Natural killer cell (primary cell): ENCODE measurements at regions of chr13 and their contacts with region 1.

Region 1: GRCh38 chr13:100674848-100675660 is 459 bp upstream of the TMTC4 start:
- DNase-seq: peak; percentile 99
- ATAC-seq: peak; percentile 90 to 98 (median 92)
- H3K4me3 ChIP-seq: peak overlapping the region; percentile 90
- H3K4me3 Mint-ChIP-seq: peak overlapping the region; percentile 96
- H3K27ac ChIP-seq: peak overlapping the region; percentile 70
- H3K27ac Mint-ChIP-seq: peak overlapping the region; percentile 71 to 95
- H3K4me1 ChIP-seq: peaks cover 23% of the 10 kb centered on the region
- H3K4me1 Mint-ChIP-seq: peaks cover 32 to 44% of the 10 kb centered on the region in 2 donors
- H3K27me3 ChIP-seq: no peaks in the 10 kb centered on the region
- H3K27me3 Mint-ChIP-seq: no peaks in the 10 kb centered on the region
- CTCF ChIP-seq: peak; percentile 26

Region 2: DNA sequence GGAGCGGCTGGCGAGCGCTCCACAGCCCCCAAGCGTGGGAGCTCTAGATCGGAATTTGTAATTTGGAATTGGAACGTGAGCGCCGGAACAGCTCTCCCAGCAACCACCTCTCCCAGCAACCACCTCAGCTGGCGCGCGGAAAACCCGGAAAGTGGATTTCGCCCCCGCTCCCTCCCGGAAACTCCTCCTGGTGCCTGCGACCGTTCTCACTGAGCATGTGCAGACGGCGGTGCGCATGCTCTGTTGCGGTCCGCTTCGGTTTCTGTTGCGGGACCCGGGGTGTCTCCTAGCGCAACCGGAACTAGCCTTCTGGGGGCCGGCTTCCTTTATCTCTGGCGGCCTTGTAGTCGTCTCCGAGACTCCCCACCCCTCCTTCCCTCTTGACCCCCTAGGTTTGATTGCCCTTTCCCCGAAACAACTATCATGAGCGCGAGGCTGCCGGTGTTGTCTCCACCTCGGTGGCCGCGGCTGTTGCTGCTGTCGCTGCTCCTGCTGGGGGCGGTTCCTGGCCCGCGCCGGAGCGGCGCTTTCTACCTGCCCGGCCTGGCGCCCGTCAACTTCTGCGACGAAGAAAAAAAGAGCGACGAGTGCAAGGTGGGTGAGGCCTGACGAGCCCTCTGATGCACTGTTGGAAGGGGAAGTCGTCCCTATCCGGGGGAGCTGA is 1173.7 kb before region 1 on chr13 and contains the start of gene TM9SF2:
- intact Hi-C with region 1: loop called (anchors 10 kb)
- DNase-seq: peak; percentile 97 to 99
- ATAC-seq: peak; percentile 61 to 78 (median 74)
- H3K4me3 ChIP-seq: peak within 1 kb of the TSS; percentile 88
- H3K4me3 Mint-ChIP-seq: peak within 1 kb of the TSS; percentile 96
- H3K27ac ChIP-seq: peak within 1 kb of the TSS; percentile 89
- H3K27ac Mint-ChIP-seq: peak within 1 kb of the TSS; percentile 94 to 98
- H3K4me1 ChIP-seq: peaks cover 45% of the 10 kb centered on the region
- H3K4me1 Mint-ChIP-seq: peaks cover 81 to 83% of the 10 kb centered on the region in 2 donors
- H3K27me3 ChIP-seq: no peaks in the 10 kb centered on the region
- H3K27me3 Mint-ChIP-seq: no peaks in the 10 kb centered on the region
- CTCF ChIP-seq: no peak
- total RNA-seq, gene TM9SF2: 41.8 to 62.1 (median 51.4) TPM

Region 3: GRCh38 chr13:99577934-99578917 is 1096.8 kb before region 1 on chr13:
- intact Hi-C with region 1: no loop called
- DNase-seq: peak in 1 of 2 donors; percentile 26
- ATAC-seq: no peak
- H3K4me3 ChIP-seq: no peak overlapping the region
- H3K4me3 Mint-ChIP-seq: no peak overlapping the region
- H3K27ac ChIP-seq: no peak overlapping the region
- H3K27ac Mint-ChIP-seq: no peak overlapping the region
- H3K4me1 ChIP-seq: peaks cover 3% of the 10 kb centered on the region
- H3K4me1 Mint-ChIP-seq: peaks cover 9% of the 10 kb centered on the region in 2 donors
- H3K27me3 ChIP-seq: no peaks in the 10 kb centered on the region
- H3K27me3 Mint-ChIP-seq: no peaks in the 10 kb centered on the region
- CTCF ChIP-seq: no peak

Region 4: DNA sequence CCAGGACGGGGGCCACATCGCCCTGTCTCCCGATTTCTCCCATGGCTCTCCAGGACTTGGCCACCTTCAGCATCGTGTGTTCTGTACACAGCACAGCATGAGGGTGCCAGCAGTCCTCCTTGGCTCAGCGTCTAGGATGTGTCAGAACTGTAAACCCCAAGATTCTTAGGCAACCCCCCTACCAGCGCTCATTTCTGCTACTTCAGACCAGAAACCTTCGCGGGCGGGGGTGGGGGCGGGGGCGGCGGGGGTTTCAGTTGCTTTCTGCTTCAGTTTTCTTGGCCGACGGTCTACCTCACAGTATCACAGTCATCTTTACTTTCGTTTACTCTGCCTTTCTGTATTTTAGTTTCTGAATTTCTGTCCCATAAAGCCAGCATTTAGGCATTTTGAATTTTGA is 168.9 kb before region 1 on chr13:
- intact Hi-C with region 1: no loop called
- DNase-seq: peak in 1 of 2 donors; percentile 16
- ATAC-seq: peak; percentile 66 to 78 (median 70)
- H3K4me3 ChIP-seq: no peak overlapping the region
- H3K4me3 Mint-ChIP-seq: peak overlapping the region; percentile 67
- H3K27ac ChIP-seq: peak overlapping the region; percentile 53
- H3K27ac Mint-ChIP-seq: peak overlapping the region; percentile 74 to 85
- H3K4me1 ChIP-seq: peaks cover 17% of the 10 kb centered on the region
- H3K4me1 Mint-ChIP-seq: peaks cover 21 to 36% of the 10 kb centered on the region in 2 donors
- H3K27me3 ChIP-seq: no peaks in the 10 kb centered on the region
- H3K27me3 Mint-ChIP-seq: no peaks in the 10 kb centered on the region
- CTCF ChIP-seq: no peak

Region 5: DNA sequence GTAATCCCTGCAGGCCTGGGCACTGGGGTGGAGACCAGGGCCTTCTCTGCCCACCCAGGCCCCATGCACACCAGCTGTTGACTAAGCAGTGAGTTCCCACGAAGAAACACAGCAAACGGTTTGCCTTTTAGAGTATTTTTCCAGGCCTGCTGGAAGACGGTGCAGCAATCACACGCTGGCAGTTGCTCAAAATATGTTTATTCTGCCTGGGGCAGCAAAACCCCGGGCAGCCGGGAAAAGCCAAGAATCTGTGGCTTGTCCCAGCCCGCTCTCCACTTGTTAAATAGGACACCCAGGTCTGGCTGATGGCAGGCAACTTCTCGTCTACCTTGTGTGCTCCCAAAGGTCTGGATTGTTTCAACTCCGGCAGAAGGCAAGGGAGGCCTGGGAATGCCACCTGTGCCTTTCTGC is 127.3 kb before region 1 on chr13:
- intact Hi-C with region 1: no loop called
- DNase-seq: no peak
- ATAC-seq: no peak
- H3K4me3 ChIP-seq: no peak overlapping the region
- H3K4me3 Mint-ChIP-seq: no peak overlapping the region
- H3K27ac ChIP-seq: no peak overlapping the region
- H3K27ac Mint-ChIP-seq: no peak overlapping the region
- H3K4me1 ChIP-seq: no peaks in the 10 kb centered on the region
- H3K4me1 Mint-ChIP-seq: peaks cover 3 to 7% of the 10 kb centered on the region in 2 donors
- H3K27me3 ChIP-seq: no peaks in the 10 kb centered on the region
- H3K27me3 Mint-ChIP-seq: no peaks in the 10 kb centered on the region
- CTCF ChIP-seq: no peak

Region 6: GRCh38 chr13:100588331-100589177 is 86.5 kb before region 1 on chr13 and contains the start of gene GGACT:
- intact Hi-C with region 1: loop called (anchors 5 kb)
- DNase-seq: peak; percentile 81 to 91
- ATAC-seq: peak; percentile 96
- H3K4me3 ChIP-seq: peak within 1 kb of the TSS; percentile 63
- H3K4me3 Mint-ChIP-seq: peak within 1 kb of the TSS; percentile 92
- H3K27ac ChIP-seq: peak within 1 kb of the TSS; percentile 78
- H3K27ac Mint-ChIP-seq: peak within 1 kb of the TSS; percentile 86 to 91
- H3K4me1 ChIP-seq: peaks cover 15% of the 10 kb centered on the region
- H3K4me1 Mint-ChIP-seq: peaks cover 25 to 26% of the 10 kb centered on the region in 2 donors
- H3K27me3 ChIP-seq: no peaks in the 10 kb centered on the region
- H3K27me3 Mint-ChIP-seq: no peaks in the 10 kb centered on the region
- CTCF ChIP-seq: peak; percentile 82
- total RNA-seq, gene GGACT: 8.8 to 16.4 (median 15.1) TPM

Region 7: DNA sequence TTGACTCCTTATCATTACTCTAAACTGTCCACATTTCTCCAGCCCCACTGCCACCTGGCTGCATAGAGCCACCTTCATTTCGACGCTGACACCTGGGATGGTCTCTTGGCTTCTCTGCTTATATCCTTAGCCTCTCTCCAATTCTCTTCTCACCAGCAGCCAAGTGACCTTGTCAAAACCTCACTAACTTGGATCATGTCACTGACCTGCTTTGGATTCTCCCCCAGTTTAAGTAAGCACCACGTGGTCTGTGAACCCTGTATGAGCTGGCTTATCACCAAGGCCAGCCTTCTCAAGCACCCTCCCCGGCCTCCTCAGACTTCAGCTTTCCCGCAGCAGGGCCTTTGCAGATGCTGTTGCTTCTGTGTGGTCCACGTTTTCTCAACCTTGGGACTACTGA is 74.1 kb before region 1 on chr13:
- intact Hi-C with region 1: no loop called
- DNase-seq: no peak
- ATAC-seq: no peak
- H3K4me3 ChIP-seq: no peak overlapping the region
- H3K4me3 Mint-ChIP-seq: no peak overlapping the region
- H3K27ac ChIP-seq: no peak overlapping the region
- H3K27ac Mint-ChIP-seq: no peak overlapping the region
- H3K4me1 ChIP-seq: no peaks in the 10 kb centered on the region
- H3K4me1 Mint-ChIP-seq: peaks cover 0 to 11% of the 10 kb centered on the region in 2 donors
- H3K27me3 ChIP-seq: no peaks in the 10 kb centered on the region
- H3K27me3 Mint-ChIP-seq: peaks cover 0 to 4% of the 10 kb centered on the region in 2 donors
- CTCF ChIP-seq: no peak

Region 8: GRCh38 chr13:100611678-100612492 is 63.2 kb before region 1 on chr13:
- intact Hi-C with region 1: loop called (anchors 5 kb)
- DNase-seq: peak; percentile 61 to 65
- ATAC-seq: peak; percentile 65 to 81 (median 77)
- H3K4me3 ChIP-seq: no peak overlapping the region
- H3K4me3 Mint-ChIP-seq: peak overlapping the region; percentile 78
- H3K27ac ChIP-seq: peak overlapping the region; percentile 51
- H3K27ac Mint-ChIP-seq: peak overlapping the region; percentile 84 to 96
- H3K4me1 ChIP-seq: peaks cover 38% of the 10 kb centered on the region
- H3K4me1 Mint-ChIP-seq: peaks cover 61 to 64% of the 10 kb centered on the region in 2 donors
- H3K27me3 ChIP-seq: no peaks in the 10 kb centered on the region
- H3K27me3 Mint-ChIP-seq: no peaks in the 10 kb centered on the region
- CTCF ChIP-seq: no peak